ENCODE measurements at regions of chr11 and their contacts with region 1.

Region 1: GRCh38 chr11:44621140-44621681 is 55.7 kb downstream of the CD82 start:
- DNase-seq: no peak
- H3K4me3 ChIP-seq: no peak overlapping the region
- H3K27ac ChIP-seq: no peak overlapping the region
- H3K27me3 ChIP-seq: no peaks in the 10 kb centered on the region
- CTCF ChIP-seq: peak; percentile 98

Region 2: GRCh38 chr11:44464741-44465140 is 156.5 kb before region 1 on chr11:
- CTCF ChIA-PET with region 1: no interaction called
- POLR2A ChIA-PET with region 1: no interaction called
- DNase-seq: no peak
- H3K4me3 ChIP-seq: no peak overlapping the region
- H3K27ac ChIP-seq: no peak overlapping the region
- H3K27me3 ChIP-seq: peaks cover 5% of the 10 kb centered on the region
- CTCF ChIP-seq: 0 out of 2 replicates have a peak, but pooled peaks have one; percentile 14

Region 3: GRCh38 chr11:44551456-44552139 is 69.6 kb before region 1 on chr11:
- CTCF ChIA-PET with region 1: interaction called, 318 read pairs
- POLR2A ChIA-PET with region 1: interaction called, 4 read pairs
- DNase-seq: no peak
- H3K4me3 ChIP-seq: no peak overlapping the region
- H3K27ac ChIP-seq: no peak overlapping the region
- H3K27me3 ChIP-seq: peaks cover 6% of the 10 kb centered on the region
- CTCF ChIP-seq: no peak

Region 4: GRCh38 chr11:44565211-44565952 is 55.8 kb before region 1 on chr11 and contains the start of gene CD82:
- CTCF ChIA-PET with region 1: interaction called, 318 read pairs
- POLR2A ChIA-PET with region 1: interaction called, 5 read pairs
- DNase-seq: peak; percentile 96
- H3K4me3 ChIP-seq: peak within 1 kb of the TSS; percentile 83
- H3K27ac ChIP-seq: peak within 1 kb of the TSS; percentile 99
- H3K27me3 ChIP-seq: no peaks in the 10 kb centered on the region
- CTCF ChIP-seq: peak; percentile 26; the same call in 1 of the 2 replicates
- polyA plus RNA-seq, gene CD82: 49.3 and 62.0 TPM in 2 replicates

Region 5: DNA sequence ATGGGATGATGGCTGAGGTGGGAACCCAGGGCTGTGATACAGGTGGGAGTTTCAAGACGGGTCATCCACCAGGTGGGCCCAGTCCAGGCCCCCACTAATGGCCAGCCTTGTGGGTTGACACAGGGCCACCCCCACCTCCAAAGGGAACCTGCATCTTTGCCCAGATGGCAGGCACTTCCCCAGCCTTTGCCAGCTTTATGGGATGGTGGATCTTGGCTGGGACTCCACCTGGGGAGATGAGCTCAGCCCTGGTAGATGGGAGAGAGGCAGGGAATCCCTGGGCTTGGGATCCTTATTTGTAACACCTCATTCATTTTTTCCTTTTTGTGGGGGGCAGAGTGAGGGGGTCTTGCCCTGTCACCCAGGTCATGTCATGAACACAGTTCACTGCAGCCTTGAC is 22.4 kb before region 1 on chr11:
- CTCF ChIA-PET with region 1: interaction called, 10 read pairs
- POLR2A ChIA-PET with region 1: no interaction called
- DNase-seq: no peak
- H3K4me3 ChIP-seq: no peak overlapping the region
- H3K27ac ChIP-seq: no peak overlapping the region
- H3K27me3 ChIP-seq: no peaks in the 10 kb centered on the region
- CTCF ChIP-seq: no peak

Region 6: DNA sequence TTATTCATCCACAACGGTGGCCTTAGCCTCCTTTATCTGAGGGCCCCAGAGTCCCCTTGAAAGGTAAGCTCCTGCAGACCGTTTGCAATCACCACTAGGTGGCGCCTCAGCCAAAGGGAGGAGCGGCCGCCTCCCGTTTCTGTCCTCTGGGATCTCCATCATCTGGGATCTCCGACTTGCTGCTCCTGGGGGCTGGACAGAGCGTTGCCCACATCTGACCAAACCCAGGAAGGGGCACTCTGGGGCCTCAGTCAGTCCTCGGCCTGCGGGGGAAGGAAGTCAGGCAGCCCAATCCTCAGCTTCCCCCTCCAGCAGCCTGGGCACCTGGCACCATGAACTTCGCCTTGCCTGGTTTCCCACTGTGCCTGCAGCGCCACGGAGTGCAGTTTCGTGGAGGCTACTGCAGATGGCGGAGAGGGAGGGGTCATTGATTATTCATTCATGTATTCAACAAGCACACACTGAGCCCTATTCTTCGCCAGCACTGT is 306.0 kb after region 1 on chr11:
- CTCF ChIA-PET with region 1: interaction called, 10 read pairs
- POLR2A ChIA-PET with region 1: no interaction called
- DNase-seq: peak; percentile 39
- H3K4me3 ChIP-seq: no peak overlapping the region
- H3K27ac ChIP-seq: no peak overlapping the region
- H3K27me3 ChIP-seq: peaks cover 37% of the 10 kb centered on the region
- CTCF ChIP-seq: peak; percentile 86

Measured in AG04450 (cell line).